ENCODE measurements at regions of chr13 and their contacts with region 1.

Region 1: GRCh38 chr13:23321535-23322241 is 111.8 kb downstream of the SACS start:
- DNase-seq: peak; percentile 97
- H3K4me3 ChIP-seq: peak overlapping the region; percentile 69
- H3K27ac ChIP-seq: peak overlapping the region; percentile 94
- H3K4me1 ChIP-seq: peaks cover 51% of the 10 kb centered on the region
- H3K27me3 ChIP-seq: no peaks in the 10 kb centered on the region

Region 2: DNA sequence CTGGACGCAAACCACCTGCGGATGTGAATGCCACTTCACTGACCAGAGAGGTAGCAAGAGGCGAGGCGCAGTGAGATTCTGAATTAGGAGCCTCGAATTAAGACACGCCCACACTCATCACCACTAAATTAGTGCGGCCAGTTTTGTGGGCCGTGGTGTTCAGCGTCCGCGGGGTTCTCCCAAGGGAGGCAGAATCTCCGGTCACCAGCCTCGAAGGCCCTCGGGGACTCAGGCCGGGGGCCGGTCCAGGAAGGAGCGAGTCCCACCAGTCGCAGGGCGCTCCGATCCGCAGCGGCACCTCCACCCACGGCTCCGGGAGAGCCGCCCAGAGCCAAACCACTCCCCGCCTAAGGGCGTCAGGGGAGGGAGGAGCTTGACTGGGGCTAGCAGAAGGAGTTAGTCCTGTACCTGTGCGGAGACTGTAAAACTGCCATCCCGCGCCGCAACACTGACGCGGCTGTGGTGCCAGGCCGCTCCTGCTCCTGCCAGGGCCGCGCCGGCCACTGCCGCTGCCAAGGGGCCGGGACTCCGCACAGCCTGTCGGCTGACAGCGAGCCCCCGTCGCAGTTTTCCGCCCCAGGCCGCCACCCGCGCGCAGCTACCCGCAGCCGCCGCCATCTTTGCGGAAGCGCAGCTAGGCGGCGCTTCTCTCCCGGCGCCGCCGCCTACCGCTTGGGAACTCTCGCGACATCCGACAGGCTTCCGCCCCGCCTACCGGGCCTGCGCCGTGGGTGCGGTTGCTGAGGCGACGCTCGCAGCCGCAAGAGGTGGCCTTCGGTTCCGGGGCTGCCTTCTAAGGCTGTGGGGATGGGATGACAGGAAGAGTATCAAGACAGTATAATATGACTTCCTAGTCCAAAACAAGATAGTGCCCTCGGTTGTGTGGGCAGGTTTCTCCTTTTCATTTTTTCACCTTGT is 1717.9 kb before region 1 on chr13 and contains the start of gene MICU2:
- in situ Hi-C with region 1: loop called (anchors 25 kb)
- DNase-seq: peak; percentile 98
- H3K4me3 ChIP-seq: peak within 1 kb of the TSS; percentile 82
- H3K27ac ChIP-seq: peak within 1 kb of the TSS; percentile 88
- H3K4me1 ChIP-seq: 0 out of 2 replicates have a peak, but pooled peaks cover 2% of the 10 kb centered on the region
- H3K27me3 ChIP-seq: no peaks in the 10 kb centered on the region
- total RNA-seq, gene MICU2: 44.1 and 61.7 TPM in 2 replicates

Region 3: DNA sequence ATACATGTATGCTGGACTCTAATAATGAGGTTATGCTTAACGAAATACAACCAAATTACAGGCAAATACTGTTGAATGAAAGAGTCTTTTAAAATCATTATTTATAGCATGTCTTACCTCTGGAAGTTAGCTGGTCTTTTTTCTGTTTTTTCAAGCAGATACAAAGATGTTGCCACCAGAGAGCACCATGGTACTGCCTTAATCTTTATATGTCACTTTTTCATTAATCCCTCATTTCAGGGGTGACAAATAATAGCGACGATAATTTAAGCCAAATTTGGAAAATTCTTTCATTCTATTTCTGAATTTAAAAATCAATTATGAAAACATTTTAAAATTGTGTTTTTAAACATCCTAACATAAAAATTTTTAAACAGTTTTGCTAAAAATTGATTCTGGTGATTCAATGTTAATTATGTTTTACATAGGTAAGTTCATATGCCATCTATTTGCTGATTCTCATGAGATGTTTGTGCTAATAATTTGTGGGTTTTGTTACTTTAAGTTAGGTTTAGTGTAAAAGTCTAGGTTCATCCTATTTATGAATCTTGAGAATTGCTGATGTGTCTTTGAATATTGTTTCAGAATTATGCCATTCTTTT is 520.2 kb before region 1 on chr13:
- in situ Hi-C with region 1: loop called (anchors 25 kb)
- DNase-seq: peak; percentile 34
- H3K4me3 ChIP-seq: peak overlapping the region; percentile 16; the same call in 1 of the 2 replicates
- H3K27ac ChIP-seq: no peak overlapping the region
- H3K4me1 ChIP-seq: no peaks in the 10 kb centered on the region
- H3K27me3 ChIP-seq: peaks cover 5% of the 10 kb centered on the region; the same call in 1 of the 2 replicates